Left cardiac atrium (tissue), 4 donors: ENCODE measurements at regions of chr19 and their contacts with region 1.

Region 1: DNA sequence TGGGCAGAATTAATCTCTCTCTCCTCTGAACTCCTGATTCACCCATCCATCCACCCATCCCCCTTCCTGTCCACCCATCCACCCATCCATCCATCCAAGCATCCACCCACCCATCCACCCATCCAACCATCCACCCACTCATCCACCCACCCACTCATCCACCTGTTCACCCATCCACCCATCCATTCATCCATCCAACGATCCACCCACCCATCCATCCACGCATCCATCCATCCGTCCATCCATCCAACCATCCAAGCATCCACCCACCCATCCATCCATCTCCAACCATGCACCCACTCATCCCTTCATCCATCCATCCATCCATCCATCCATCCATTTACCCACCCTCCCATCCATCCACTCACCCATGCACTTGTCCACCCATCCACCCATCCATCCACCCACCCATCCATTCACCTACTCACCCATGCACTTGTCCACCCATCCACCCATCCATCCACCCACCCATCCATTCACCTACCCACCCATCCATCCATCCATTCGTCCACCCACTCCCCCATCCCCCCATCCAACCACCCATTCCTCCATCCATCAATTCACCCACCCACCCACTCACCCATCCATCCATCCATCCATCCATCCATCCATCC is 18.7 kb downstream of the MEX3D start:
- DNase-seq: no peak
- ATAC-seq: no peak

Region 2: DNA sequence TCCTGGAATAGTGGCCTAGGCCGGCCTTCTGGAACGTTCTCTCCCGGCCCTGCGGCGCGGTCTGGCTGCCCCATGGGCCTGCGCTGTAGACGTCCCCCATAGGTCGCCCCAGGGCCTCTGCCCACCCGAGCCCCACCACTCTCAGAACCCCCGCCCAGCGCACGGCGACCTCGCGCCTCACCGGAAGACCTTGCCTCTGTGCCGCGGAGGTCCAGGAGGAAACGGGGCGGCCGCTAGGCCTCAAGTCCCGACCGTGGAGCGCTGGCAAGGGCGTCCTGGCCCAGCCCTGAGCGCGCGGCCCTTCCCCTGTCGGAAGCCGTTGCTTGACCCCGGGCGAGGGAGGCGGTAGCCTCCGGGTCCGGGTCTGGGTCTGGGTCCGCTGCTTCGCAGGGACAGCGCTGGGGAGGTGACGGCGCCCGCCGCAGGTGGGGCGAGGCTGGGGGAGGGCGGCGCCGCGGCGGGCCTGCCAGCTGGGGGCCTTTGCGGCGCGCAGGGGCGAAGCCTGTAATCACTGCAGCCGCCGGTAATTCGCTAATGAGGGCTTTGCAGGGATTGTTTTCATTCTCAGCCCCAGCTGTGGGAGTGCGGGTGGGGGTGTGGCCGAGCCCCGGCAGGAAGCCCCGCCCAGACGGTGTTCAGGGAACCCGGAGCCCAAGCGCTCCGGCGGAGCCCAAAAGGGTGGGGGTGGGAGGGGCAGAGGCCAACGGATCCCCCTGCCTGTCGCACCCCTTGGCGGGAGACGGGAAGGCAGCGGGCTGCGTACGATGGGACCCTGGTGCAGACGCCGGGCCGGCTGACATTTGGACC is 79.0 kb before region 1 on chr19:
- intact Hi-C with region 1: no loop called
- DNase-seq: peak; percentile 70
- ATAC-seq: peak; percentile 35 to 51

Region 3: GRCh38 chr19:1672038-1672768 is 122.8 kb after region 1 on chr19:
- intact Hi-C with region 1: loop called (anchors 5 kb)
- DNase-seq: peak; percentile 46
- ATAC-seq: peak; percentile 67 to 78

Region 4: GRCh38 chr19:1767464-1767933 is 218.1 kb after region 1 on chr19:
- intact Hi-C with region 1: loop called (anchors 5 to 10 kb)
- DNase-seq: no peak
- ATAC-seq: peak; percentile 69 to 73